HCT116 (cell line): ENCODE measurements at regions of chr1 and their contacts with region 1.

Region 1: GRCh38 chr1:236753516-236753915 is 41.6 kb upstream of the MTR start:
- DNase-seq: peak; percentile 56
- ATAC-seq: peak; percentile 100
- H3K4me3 ChIP-seq: no peak overlapping the region
- H3K27ac ChIP-seq: no peak overlapping the region
- H3K4me1 ChIP-seq: no peaks in the 10 kb centered on the region
- H3K27me3 ChIP-seq: no peaks in the 10 kb centered on the region
- CTCF ChIP-seq: peak; percentile 42 to 55 (median 43); a peak in 5 of 6 replicates
- POLR2A ChIP-seq: no peak
- RAD21 ChIP-seq: peak; percentile 73

Region 2: GRCh38 chr1:236868625-236869467 is 115.3 kb after region 1 on chr1:
- CTCF ChIA-PET with region 1: interaction called, 3 read pairs
- POLR2A ChIA-PET with region 1: no interaction called
- RAD21 ChIA-PET with region 1: no interaction called
- intact Hi-C with region 1: loop called (anchors 1 kb)
- DNase-seq: peak; percentile 51
- ATAC-seq: peak; percentile 95
- H3K4me3 ChIP-seq: no peak overlapping the region
- H3K27ac ChIP-seq: no peak overlapping the region
- H3K4me1 ChIP-seq: no peaks in the 10 kb centered on the region
- H3K27me3 ChIP-seq: no peaks in the 10 kb centered on the region
- CTCF ChIP-seq: peak; percentile 71 to 96 (median 93); a peak in 5 of 6 replicates
- POLR2A ChIP-seq: no peak
- RAD21 ChIP-seq: peak; percentile 76

Region 3: GRCh38 chr1:236947794-236948193 is 194.3 kb after region 1 on chr1:
- CTCF ChIA-PET with region 1: no interaction called
- POLR2A ChIA-PET with region 1: no interaction called
- RAD21 ChIA-PET with region 1: no interaction called
- intact Hi-C with region 1: no loop called
- DNase-seq: no peak
- ATAC-seq: no peak
- H3K4me3 ChIP-seq: no peak overlapping the region
- H3K27ac ChIP-seq: no peak overlapping the region
- H3K4me1 ChIP-seq: no peaks in the 10 kb centered on the region
- H3K27me3 ChIP-seq: peaks cover 10% of the 10 kb centered on the region
- CTCF ChIP-seq: no peak
- POLR2A ChIP-seq: no peak
- RAD21 ChIP-seq: no peak

Region 4: GRCh38 chr1:237124856-237125462 is 371.4 kb after region 1 on chr1:
- CTCF ChIA-PET with region 1: no interaction called
- POLR2A ChIA-PET with region 1: no interaction called
- RAD21 ChIA-PET with region 1: no interaction called
- intact Hi-C with region 1: loop called (anchors 2 kb)
- DNase-seq: peak; percentile 8
- ATAC-seq: peak; percentile 53
- H3K4me3 ChIP-seq: no peak overlapping the region
- H3K27ac ChIP-seq: no peak overlapping the region
- H3K4me1 ChIP-seq: no peaks in the 10 kb centered on the region
- H3K27me3 ChIP-seq: no peaks in the 10 kb centered on the region
- CTCF ChIP-seq: peak; percentile 35 to 80 (median 67); a peak in 5 of 6 replicates
- POLR2A ChIP-seq: no peak
- RAD21 ChIP-seq: peak; percentile 39

Region 5: GRCh38 chr1:237562242-237562823 is 808.8 kb after region 1 on chr1:
- CTCF ChIA-PET with region 1: interaction called, 22 read pairs
- POLR2A ChIA-PET with region 1: no interaction called
- RAD21 ChIA-PET with region 1: no interaction called
- intact Hi-C with region 1: loop called (anchors 5 kb)
- DNase-seq: no peak
- ATAC-seq: peak; percentile 67
- H3K4me3 ChIP-seq: no peak overlapping the region
- H3K27ac ChIP-seq: no peak overlapping the region
- H3K4me1 ChIP-seq: no peaks in the 10 kb centered on the region
- H3K27me3 ChIP-seq: no peaks in the 10 kb centered on the region
- CTCF ChIP-seq: peak; percentile 23 to 62 (median 39); a peak in 5 of 6 replicates
- POLR2A ChIP-seq: no peak
- RAD21 ChIP-seq: peak; percentile 47

Region 6: GRCh38 chr1:237583756-237584155 is 830.2 kb after region 1 on chr1:
- CTCF ChIA-PET with region 1: no interaction called
- POLR2A ChIA-PET with region 1: no interaction called
- RAD21 ChIA-PET with region 1: no interaction called
- intact Hi-C with region 1: no loop called
- DNase-seq: no peak
- ATAC-seq: no peak
- H3K4me3 ChIP-seq: no peak overlapping the region
- H3K27ac ChIP-seq: no peak overlapping the region
- H3K4me1 ChIP-seq: no peaks in the 10 kb centered on the region
- H3K27me3 ChIP-seq: no peaks in the 10 kb centered on the region
- CTCF ChIP-seq: no peak
- POLR2A ChIP-seq: no peak
- RAD21 ChIP-seq: no peak